ENCODE measurements at regions of chr12 and their contacts with region 1.

Region 1: GRCh38 chr12:123232807-123233543 is at the starts of genes MPHOSPH9 and MTRFR:
- DNase-seq: peak; percentile 100
- H3K4me3 Mint-ChIP-seq: peak within 1 kb of the TSS; percentile 84
- H3K27ac Mint-ChIP-seq: peak within 1 kb of the TSS; percentile 82
- H3K4me1 Mint-ChIP-seq: peaks cover 24% of the 10 kb centered on the region
- H3K27me3 Mint-ChIP-seq: no peaks in the 10 kb centered on the region
- CTCF ChIP-seq: no peak
- total RNA-seq, gene MPHOSPH9: 27.5 and 40.4 TPM in 2 replicates
- total RNA-seq, gene MTRFR: 21.9 and 26.5 TPM in 2 replicates

Region 2: DNA sequence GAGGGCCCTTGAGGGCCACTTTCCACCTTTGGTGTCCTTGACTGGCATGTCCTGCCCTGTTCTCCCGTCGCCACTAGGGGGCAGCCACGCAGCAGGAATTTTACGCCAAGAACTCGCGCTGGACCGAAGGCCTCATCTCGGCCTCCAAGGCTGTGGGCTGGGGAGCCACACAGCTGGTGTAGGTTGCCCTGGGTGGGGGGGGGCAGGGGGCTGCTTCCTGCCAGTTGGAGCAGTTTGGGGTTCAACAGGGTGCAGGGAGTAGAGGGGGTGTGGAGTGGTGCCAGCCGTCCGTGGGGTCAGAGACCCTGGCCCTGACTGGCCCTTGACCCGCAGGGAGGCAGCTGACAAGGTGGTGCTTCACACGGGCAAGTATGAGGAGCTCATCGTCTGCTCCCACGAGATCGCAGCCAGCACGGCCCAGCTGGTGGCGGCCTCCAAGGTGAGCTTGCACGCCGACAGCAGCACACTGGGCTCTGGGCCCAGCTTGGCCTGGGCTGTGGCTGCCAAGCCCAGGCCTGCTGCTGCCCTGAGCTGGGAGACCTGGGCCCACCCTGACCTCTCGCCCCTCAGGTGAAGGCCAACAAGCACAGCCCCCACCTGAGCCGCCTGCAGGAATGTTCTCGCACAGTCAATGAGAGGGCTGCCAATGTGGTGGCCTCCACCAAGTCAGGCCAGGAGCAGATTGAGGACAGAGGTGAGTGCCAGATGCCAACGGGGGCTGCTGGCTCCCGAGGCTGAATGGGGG is 372.5 kb before region 1 on chr12:
- CTCF ChIA-PET with region 1: interaction called, 4 read pairs
- POLR2A ChIA-PET with region 1: interaction called, 4 read pairs
- intact Hi-C with region 1: loop called (anchors 1 kb)
- DNase-seq: peak; percentile 79
- H3K4me3 Mint-ChIP-seq: no peak overlapping the region
- H3K27ac Mint-ChIP-seq: no peak overlapping the region
- H3K4me1 Mint-ChIP-seq: peaks cover 6% of the 10 kb centered on the region
- H3K27me3 Mint-ChIP-seq: no peaks in the 10 kb centered on the region
- CTCF ChIP-seq: peak; percentile 85

Region 3: GRCh38 chr12:122965851-122966722 is 266.9 kb before region 1 on chr12 and contains the start of gene ABCB9:
- CTCF ChIA-PET with region 1: interaction called, 4 read pairs
- POLR2A ChIA-PET with region 1: interaction called, 15 read pairs
- intact Hi-C with region 1: loop called (anchors 5 kb)
- DNase-seq: peak; percentile 92
- H3K4me3 Mint-ChIP-seq: peak within 1 kb of the TSS; percentile 72
- H3K27ac Mint-ChIP-seq: no peak within 1 kb of the TSS
- H3K4me1 Mint-ChIP-seq: no peaks in the 10 kb centered on the region
- H3K27me3 Mint-ChIP-seq: no peaks in the 10 kb centered on the region
- CTCF ChIP-seq: no peak
- total RNA-seq, gene ABCB9: 1.6 and 3.2 TPM in 2 replicates

Region 4: GRCh38 chr12:122980183-122981046 is 252.6 kb before region 1 on chr12 and contains the start of gene ARL6IP4:
- CTCF ChIA-PET with region 1: interaction called, 8 read pairs
- POLR2A ChIA-PET with region 1: interaction called, 45 read pairs
- intact Hi-C with region 1: loop called (anchors 2 kb)
- DNase-seq: peak; percentile 56
- H3K4me3 Mint-ChIP-seq: peak within 1 kb of the TSS; percentile 85
- H3K27ac Mint-ChIP-seq: peak within 1 kb of the TSS; percentile 67
- H3K4me1 Mint-ChIP-seq: peaks cover 10% of the 10 kb centered on the region
- H3K27me3 Mint-ChIP-seq: no peaks in the 10 kb centered on the region
- CTCF ChIP-seq: no peak
- total RNA-seq, gene ARL6IP4: 198 and 238 TPM in 2 replicates

Region 5: DNA sequence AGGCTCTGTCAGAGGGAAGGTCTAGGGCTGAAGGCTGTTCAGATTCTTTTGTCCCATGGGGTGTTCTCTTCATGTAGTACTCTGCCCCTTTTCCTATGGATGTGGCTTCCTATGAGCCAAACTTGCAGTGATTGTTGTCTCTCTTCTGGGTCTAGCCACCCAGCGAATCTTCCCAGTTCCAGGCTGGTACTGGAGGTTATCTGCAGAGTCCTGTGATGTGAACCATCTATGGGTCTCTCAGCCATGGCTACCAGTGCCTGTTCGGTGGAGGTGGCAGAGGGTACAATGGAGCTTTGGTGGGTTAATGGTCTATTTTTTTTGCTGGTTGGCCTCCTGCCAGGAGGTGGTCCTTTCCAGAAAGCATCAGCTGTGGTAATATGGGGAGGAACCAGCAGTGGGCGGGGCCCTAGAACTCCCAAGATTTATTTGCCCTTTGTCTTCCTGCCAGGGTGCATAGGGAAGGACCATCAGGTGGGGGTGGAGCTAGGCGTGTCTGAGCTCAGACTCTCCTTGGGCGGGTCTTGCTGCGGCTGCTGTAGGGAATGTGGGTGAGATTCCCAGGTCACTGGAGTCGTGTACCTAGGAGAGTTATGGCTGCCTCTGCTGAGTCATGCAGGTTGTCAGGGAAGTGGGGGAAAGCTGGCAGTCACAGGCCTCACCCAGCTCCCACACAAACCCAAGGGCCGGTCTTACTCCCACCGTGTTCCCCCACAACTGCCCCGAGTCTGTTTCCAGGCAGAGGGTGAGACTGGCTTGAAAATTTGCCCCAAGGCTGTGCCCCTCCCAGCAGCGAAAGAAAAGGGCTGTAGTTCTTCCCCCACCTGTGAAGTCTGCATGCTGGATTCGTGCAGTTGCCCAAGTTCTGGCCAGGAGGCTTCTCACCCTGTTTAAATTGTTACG is 17.8 kb after region 1 on chr12:
- CTCF ChIA-PET with region 1: interaction called, 33 read pairs
- POLR2A ChIA-PET with region 1: interaction called, 79 read pairs
- intact Hi-C with region 1: no loop called
- DNase-seq: peak; percentile 95
- H3K4me3 Mint-ChIP-seq: peak overlapping the region; percentile 62
- H3K27ac Mint-ChIP-seq: peak overlapping the region; percentile 96
- H3K4me1 Mint-ChIP-seq: peaks cover 24% of the 10 kb centered on the region
- H3K27me3 Mint-ChIP-seq: no peaks in the 10 kb centered on the region
- CTCF ChIP-seq: no peak

Region 6: GRCh38 chr12:123388177-123388947 is 155.4 kb after region 1 on chr12:
- CTCF ChIA-PET with region 1: no interaction called
- POLR2A ChIA-PET with region 1: interaction called, 12 read pairs
- intact Hi-C with region 1: no loop called
- DNase-seq: peak; percentile 71
- H3K4me3 Mint-ChIP-seq: peak overlapping the region; percentile 68
- H3K27ac Mint-ChIP-seq: no peak overlapping the region
- H3K4me1 Mint-ChIP-seq: peaks cover 21% of the 10 kb centered on the region
- H3K27me3 Mint-ChIP-seq: no peaks in the 10 kb centered on the region
- CTCF ChIP-seq: no peak

Measured in MCF 10A (cell line).